ENCODE measurements at regions of chr15 and their contacts with region 1.

Region 1: GRCh38 chr15:85785887-85786780 is 8.6 kb downstream of the KLHL25 start:
- DNase-seq: peak; percentile 35
- H3K4me3 ChIP-seq: no peak overlapping the region
- H3K27ac ChIP-seq: peak overlapping the region; percentile 38 to 51
- H3K4me1 ChIP-seq: no peaks in the 10 kb centered on the region
- H3K27me3 ChIP-seq: no peaks in the 10 kb centered on the region
- CTCF ChIP-seq: no peak
- POLR2A ChIP-seq: no peak

Region 2: GRCh38 chr15:85750319-85750806 is 35.8 kb before region 1 on chr15:
- intact Hi-C with region 1: loop called (anchors 2 kb)
- DNase-seq: peak; percentile 48
- H3K4me3 ChIP-seq: peak overlapping the region in 1 of 2 donors; percentile 1
- H3K27ac ChIP-seq: peak overlapping the region; percentile 65 to 70
- H3K4me1 ChIP-seq: peaks cover 7% of the 10 kb centered on the region
- H3K27me3 ChIP-seq: no peaks in the 10 kb centered on the region
- CTCF ChIP-seq: peak in 1 of 4 experiments; percentile 8
- POLR2A ChIP-seq: no peak

Measured in prostate gland (tissue), 2 donors.